Activated CD4-positive, alpha-beta memory T cell treated with anti-CD3 and anti-CD28 coated beads for 36 hours (primary cell): ENCODE measurements at regions of chr14 and their contacts with region 1.

Region 1: GRCh38 chr14:91244501-91244901 is at the start of gene GPR68:
- DNase-seq: peak; percentile 51
- H3K4me3 Mint-ChIP-seq: peak within 1 kb of the TSS; percentile 73
- H3K27ac Mint-ChIP-seq: peak within 1 kb of the TSS; percentile 84
- H3K4me1 Mint-ChIP-seq: peaks cover 93% of the 10 kb centered on the region
- H3K27me3 Mint-ChIP-seq: no peaks in the 10 kb centered on the region
- total RNA-seq, gene GPR68: 6.5 to 6.9 TPM

Region 2: DNA sequence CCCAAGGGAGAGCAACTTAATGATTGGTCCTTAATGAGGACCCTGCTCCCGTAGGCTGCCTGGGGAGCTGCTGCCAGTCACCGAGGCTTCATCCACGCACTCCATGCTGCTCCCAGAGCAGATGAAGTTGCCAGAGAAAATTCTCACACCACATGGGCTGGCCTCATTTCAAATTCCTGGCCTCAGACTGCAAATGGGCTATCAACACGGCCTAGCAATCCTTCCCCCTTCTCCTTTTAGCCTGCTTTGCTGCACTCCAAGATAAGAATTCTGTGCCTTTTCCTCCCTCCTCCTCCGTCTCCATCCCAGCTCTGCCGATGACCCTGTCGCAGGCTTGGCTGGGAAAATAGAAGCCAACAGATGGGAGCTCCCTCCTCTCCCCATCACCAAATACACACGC is 141.4 kb before region 1 on chr14:
- CTCF ChIA-PET with region 1: no interaction called
- POLR2A ChIA-PET with region 1: no interaction called
- intact Hi-C with region 1: no loop called
- DNase-seq: no peak
- H3K4me3 Mint-ChIP-seq: no peak overlapping the region
- H3K27ac Mint-ChIP-seq: no peak overlapping the region
- H3K4me1 Mint-ChIP-seq: peaks cover 25% of the 10 kb centered on the region
- H3K27me3 Mint-ChIP-seq: no peaks in the 10 kb centered on the region

Region 3: DNA sequence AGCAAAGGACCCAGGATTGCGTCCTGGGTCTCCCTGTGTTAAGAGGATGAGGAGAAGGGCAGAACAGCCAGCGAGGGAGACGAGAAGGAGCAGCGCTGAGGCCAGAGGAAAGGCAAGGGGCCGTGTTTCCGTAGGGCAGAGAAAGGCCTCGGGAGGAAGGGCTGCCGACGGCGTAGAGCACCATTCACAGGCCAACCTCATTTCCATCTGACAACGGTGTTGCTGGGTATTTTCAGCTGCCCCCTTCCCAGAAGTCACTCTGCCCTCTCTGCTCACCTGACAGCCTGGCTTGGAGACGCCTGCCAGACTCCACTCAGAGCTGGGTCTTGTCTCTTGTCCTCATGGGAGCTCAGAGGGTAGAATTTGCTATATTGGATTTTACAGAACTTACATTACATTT is 51.4 kb before region 1 on chr14:
- CTCF ChIA-PET with region 1: no interaction called
- POLR2A ChIA-PET with region 1: interaction called, 5 read pairs
- intact Hi-C with region 1: loop called (anchors 2 kb)
- DNase-seq: no peak
- H3K4me3 Mint-ChIP-seq: no peak overlapping the region
- H3K27ac Mint-ChIP-seq: no peak overlapping the region
- H3K4me1 Mint-ChIP-seq: peaks cover 15% of the 10 kb centered on the region
- H3K27me3 Mint-ChIP-seq: no peaks in the 10 kb centered on the region

Region 4: GRCh38 chr14:91228112-91229004 is 16.1 kb before region 1 on chr14:
- CTCF ChIA-PET with region 1: interaction called, 71 read pairs
- POLR2A ChIA-PET with region 1: interaction called, 325 read pairs
- intact Hi-C with region 1: loop called (anchors 1 kb)
- DNase-seq: peak; percentile 95
- H3K4me3 Mint-ChIP-seq: peak overlapping the region; percentile 59
- H3K27ac Mint-ChIP-seq: peak overlapping the region; percentile 94
- H3K4me1 Mint-ChIP-seq: peaks cover 94% of the 10 kb centered on the region
- H3K27me3 Mint-ChIP-seq: no peaks in the 10 kb centered on the region

Region 5: DNA sequence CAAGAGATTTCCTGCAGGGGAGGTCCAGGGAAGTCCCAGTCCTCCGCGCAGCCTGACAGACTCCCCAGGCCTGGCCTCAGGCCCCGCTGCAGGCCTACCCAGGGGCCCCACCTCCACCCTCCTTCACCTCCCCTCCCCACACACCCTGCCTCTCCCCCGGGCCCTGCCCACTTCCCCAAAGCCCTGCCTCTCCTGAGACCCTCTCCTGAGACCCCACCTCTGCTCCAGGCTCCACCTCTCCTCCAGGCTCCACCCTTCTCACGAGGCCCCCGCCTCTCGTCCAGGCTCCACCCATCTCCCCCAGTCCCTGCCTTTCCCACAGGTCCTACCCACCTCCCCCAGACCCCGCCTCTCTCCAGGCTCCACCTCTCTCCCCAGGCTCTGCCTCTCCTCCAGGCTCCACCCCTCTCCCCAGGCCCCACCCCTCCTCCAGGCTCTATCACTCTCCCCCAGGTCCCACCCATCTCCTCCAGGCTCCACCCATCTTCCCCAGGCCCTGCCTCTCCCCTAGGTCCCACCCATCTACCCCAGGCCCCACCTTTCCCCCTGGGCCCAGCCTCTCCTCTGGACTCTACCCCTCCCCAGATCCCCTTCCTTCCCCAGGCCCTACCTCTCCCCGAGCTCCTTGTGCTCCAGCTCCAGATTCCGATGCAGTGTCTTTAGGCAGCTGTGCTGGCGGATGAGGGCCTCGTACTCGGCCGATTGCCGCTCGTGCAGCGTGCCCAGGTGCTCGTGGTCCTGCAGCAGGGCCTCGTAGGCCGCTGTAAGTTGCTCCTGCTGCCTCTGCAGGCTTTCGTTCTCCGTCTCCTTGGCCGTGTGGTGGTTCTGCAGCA is 58.8 kb after region 1 on chr14:
- CTCF ChIA-PET with region 1: no interaction called
- POLR2A ChIA-PET with region 1: interaction called, 5 read pairs
- intact Hi-C with region 1: loop called (anchors 1 kb)
- DNase-seq: peak; percentile 94
- H3K4me3 Mint-ChIP-seq: peak overlapping the region; percentile 54
- H3K27ac Mint-ChIP-seq: peak overlapping the region; percentile 95
- H3K4me1 Mint-ChIP-seq: peaks cover 56% of the 10 kb centered on the region
- H3K27me3 Mint-ChIP-seq: no peaks in the 10 kb centered on the region

Region 6: DNA sequence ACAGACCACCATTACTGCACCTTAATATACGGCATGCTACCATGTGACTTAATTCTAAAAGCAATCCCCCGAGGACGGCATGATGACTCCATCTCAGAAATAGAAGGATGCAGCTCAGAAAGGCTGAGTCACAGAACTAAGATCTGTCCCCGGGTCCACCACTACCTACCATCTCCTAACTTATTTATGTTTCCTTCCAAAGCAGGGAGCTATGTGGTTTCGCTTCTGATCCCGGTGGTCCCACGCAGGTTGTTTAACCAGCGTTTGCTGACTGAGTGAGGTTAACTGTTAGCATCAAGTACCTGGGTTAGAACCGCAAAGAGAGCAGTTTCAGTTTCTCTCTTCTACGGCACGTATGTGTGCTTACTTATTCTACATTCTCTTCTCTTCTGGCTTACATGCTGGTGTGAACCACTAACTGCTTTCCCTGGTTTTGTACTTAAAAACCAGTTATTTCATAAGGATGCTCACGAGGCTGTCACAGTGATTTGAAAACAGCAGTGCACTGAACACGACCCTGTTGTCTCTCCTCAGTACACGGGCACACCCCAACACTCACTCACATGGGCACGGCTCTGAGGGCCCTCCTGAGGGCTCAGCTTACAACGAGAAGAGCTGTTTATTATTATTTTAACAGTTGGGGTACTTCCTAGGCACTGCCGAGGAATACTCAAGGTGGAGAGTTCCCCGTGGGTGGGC is 106.5 kb after region 1 on chr14:
- CTCF ChIA-PET with region 1: interaction called, 3 read pairs
- POLR2A ChIA-PET with region 1: interaction called, 6 read pairs
- intact Hi-C with region 1: loop called (anchors 1 kb)
- DNase-seq: peak; percentile 86
- H3K4me3 Mint-ChIP-seq: peak overlapping the region; percentile 68
- H3K27ac Mint-ChIP-seq: peak overlapping the region; percentile 88
- H3K4me1 Mint-ChIP-seq: peaks cover 93% of the 10 kb centered on the region
- H3K27me3 Mint-ChIP-seq: no peaks in the 10 kb centered on the region

Region 7: DNA sequence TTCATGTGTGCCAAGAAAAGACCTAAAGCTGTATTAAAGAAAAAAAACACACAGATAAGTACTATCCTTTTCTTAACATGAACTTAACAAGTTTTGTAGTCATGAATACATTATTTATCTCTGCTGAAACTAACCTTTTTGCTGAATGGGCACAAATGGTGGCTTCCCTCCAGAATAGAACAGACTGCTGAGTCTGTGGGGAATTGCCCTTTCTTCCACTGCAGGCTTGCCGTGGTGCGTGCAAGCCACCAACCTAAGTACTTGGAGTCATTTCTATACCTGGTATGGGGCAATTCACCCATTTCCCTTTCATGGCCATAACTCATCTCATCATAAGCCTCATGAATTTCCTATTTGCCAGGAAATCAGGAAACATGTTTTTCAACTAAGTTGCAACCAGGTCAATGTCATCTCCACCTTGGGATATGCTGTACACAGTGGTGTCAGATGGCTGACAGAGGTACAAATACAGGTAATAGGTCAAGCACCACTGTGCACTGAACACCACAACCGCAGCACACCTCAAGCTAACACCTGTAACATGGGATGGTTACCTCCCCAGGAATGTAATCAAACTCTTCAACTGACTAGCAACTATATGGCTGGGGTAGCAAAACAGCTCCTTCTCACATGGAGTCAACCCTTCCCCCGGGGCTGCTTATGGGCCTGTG is 437.5 kb after region 1 on chr14:
- CTCF ChIA-PET with region 1: no interaction called
- POLR2A ChIA-PET with region 1: no interaction called
- intact Hi-C with region 1: no loop called
- DNase-seq: peak; percentile 44
- H3K4me3 Mint-ChIP-seq: no peak overlapping the region
- H3K27ac Mint-ChIP-seq: no peak overlapping the region
- H3K4me1 Mint-ChIP-seq: peaks cover 17% of the 10 kb centered on the region
- H3K27me3 Mint-ChIP-seq: no peaks in the 10 kb centered on the region